CD4-positive, alpha-beta T cell (primary cell): ENCODE measurements at regions of chr10 and their contacts with region 1.

Region 1: GRCh38 chr10:98134431-98135221 is at the start of gene R3HCC1L:
- DNase-seq: peak; percentile 84 to 96 (median 92)
- ATAC-seq: peak; percentile 94
- H3K4me3 ChIP-seq: peak within 1 kb of the TSS; percentile 96
- H3K4me3 Mint-ChIP-seq: peak within 1 kb of the TSS; percentile 86
- H3K27ac ChIP-seq: peak within 1 kb of the TSS; percentile 87 to 97
- H3K27ac Mint-ChIP-seq: peak within 1 kb of the TSS; percentile 96
- H3K4me1 ChIP-seq: peaks cover 35% of the 10 kb centered on the region
- H3K4me1 Mint-ChIP-seq: peaks cover 48% of the 10 kb centered on the region
- H3K27me3 ChIP-seq: no peaks in the 10 kb centered on the region
- H3K27me3 Mint-ChIP-seq: no peaks in the 10 kb centered on the region
- CTCF ChIP-seq: no peak
- total RNA-seq, gene R3HCC1L: 12.7 to 13.7 TPM

Region 2: DNA sequence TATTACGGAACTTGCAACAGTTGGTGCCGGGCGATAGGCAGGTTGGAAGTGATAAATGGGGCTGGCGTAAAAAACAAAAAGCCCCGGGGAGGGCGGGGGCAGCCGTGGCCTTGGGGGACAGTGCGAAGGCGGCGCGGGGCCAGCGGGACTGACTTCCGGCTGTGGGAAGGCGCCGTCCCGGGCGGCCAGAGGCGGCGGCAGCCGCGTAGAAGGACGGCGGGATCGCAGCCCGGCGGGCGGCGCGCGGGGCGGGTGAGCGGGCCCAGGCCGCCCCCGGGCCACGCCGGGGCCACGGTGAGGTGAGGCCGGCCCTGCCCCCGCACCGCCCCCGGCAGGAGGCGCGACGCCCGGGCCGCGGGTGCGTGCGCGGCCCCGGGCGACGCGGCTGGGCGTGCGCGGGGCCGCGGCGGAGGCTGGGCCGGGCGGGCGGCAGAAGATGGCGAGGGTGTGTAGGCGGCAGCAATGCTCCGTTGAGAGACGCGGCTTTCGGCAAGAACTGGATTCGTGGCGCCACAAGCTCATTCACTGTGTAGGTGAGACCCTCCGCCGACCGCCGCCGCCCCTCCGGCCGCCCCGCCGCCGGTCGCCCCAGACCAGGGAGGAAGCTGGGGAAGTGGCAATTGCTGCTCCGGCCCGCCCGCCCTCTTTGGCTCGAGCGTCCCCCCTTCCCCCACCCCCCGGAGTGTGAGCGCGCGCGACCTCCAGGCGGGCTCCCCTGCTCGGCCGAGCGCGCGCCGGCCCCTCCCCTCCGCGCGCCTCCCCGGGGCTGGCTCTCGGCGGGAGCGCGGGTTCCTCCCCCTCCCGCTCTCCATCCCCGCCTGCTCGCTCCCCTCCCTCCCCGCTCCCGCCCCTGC is 1302.5 kb before region 1 on chr10 and contains the start of gene LCOR:
- CTCF ChIA-PET with region 1: no interaction called
- POLR2A ChIA-PET with region 1: interaction called, 3 read pairs
- intact Hi-C with region 1: loop called in 1 of 2 experiments (anchors 10 kb)
- DNase-seq: peak; percentile 62 to 94 (median 78)
- ATAC-seq: peak; percentile 65
- H3K4me3 ChIP-seq: peak within 1 kb of the TSS; percentile 71
- H3K4me3 Mint-ChIP-seq: peak within 1 kb of the TSS; percentile 94
- H3K27ac ChIP-seq: peak within 1 kb of the TSS; percentile 78 to 80
- H3K27ac Mint-ChIP-seq: peak within 1 kb of the TSS; percentile 94
- H3K4me1 ChIP-seq: peaks cover 12% of the 10 kb centered on the region
- H3K4me1 Mint-ChIP-seq: peaks cover 54% of the 10 kb centered on the region
- H3K27me3 ChIP-seq: no peaks in the 10 kb centered on the region
- H3K27me3 Mint-ChIP-seq: no peaks in the 10 kb centered on the region
- CTCF ChIP-seq: no peak
- total RNA-seq, gene LCOR: 46.0 to 56.0 TPM

Region 3: GRCh38 chr10:97425964-97426775 is 708.5 kb before region 1 on chr10 and contains the start of gene PGAM1:
- CTCF ChIA-PET with region 1: no interaction called
- POLR2A ChIA-PET with region 1: no interaction called
- intact Hi-C with region 1: loop called in 1 of 2 experiments (anchors 10 kb)
- DNase-seq: peak; percentile 90 to 99 (median 94)
- ATAC-seq: peak; percentile 82
- H3K4me3 ChIP-seq: peak within 1 kb of the TSS; percentile 78
- H3K4me3 Mint-ChIP-seq: peak within 1 kb of the TSS; percentile 95
- H3K27ac ChIP-seq: peak within 1 kb of the TSS; percentile 75 to 85
- H3K27ac Mint-ChIP-seq: peak within 1 kb of the TSS; percentile 89
- H3K4me1 ChIP-seq: peaks cover 43% of the 10 kb centered on the region
- H3K4me1 Mint-ChIP-seq: peaks cover 46% of the 10 kb centered on the region
- H3K27me3 ChIP-seq: no peaks in the 10 kb centered on the region
- H3K27me3 Mint-ChIP-seq: no peaks in the 10 kb centered on the region
- CTCF ChIP-seq: peak; percentile 64
- total RNA-seq, gene PGAM1: 50.7 to 55.5 TPM

Region 4: GRCh38 chr10:97686962-97687784 is 447.5 kb before region 1 on chr10 and contains the start of gene AVPI1:
- CTCF ChIA-PET with region 1: no interaction called
- POLR2A ChIA-PET with region 1: interaction called, 7 read pairs
- intact Hi-C with region 1: loop called in 1 of 2 experiments (anchors 10 kb)
- DNase-seq: peak; percentile 90 to 98 (median 94)
- ATAC-seq: peak; percentile 91
- H3K4me3 ChIP-seq: peak within 1 kb of the TSS; percentile 82
- H3K4me3 Mint-ChIP-seq: peak within 1 kb of the TSS; percentile 90
- H3K27ac ChIP-seq: peak within 1 kb of the TSS; percentile 52 to 62
- H3K27ac Mint-ChIP-seq: peak within 1 kb of the TSS; percentile 75
- H3K4me1 ChIP-seq: peaks cover 35% of the 10 kb centered on the region
- H3K4me1 Mint-ChIP-seq: peaks cover 16% of the 10 kb centered on the region
- H3K27me3 ChIP-seq: no peaks in the 10 kb centered on the region
- H3K27me3 Mint-ChIP-seq: no peaks in the 10 kb centered on the region
- CTCF ChIP-seq: no peak
- total RNA-seq, gene AVPI1: 10.7 to 11.6 TPM

Region 5: DNA sequence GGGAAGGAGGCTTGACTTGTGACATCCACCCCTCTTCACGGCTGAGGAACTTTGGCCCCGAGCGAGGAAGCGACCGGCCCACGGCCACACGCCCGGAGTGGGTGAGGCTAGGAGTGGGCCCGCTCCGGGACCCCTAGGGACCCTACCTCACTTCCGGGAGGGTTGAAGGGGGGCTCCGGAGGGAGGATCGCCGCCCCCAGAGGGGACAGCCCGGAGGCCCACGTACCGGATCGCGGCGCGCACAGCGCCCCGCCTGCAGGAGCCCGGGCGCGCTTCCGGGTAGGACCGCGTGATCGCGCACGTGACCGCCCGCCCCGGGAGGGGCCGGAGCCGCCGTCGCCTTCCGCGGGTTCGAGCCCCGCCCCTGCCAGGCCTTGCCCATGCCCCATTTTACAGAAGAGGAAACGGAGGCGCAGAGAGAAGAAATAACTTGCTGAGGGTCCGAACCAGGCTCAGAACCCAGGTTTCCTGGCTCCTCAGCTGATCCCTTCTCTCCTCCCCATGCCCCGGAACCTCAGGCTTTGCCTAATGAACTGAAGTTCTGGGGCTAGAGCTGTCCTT is 312.1 kb after region 1 on chr10 and contains the start of gene HPS1:
- CTCF ChIA-PET with region 1: no interaction called
- POLR2A ChIA-PET with region 1: interaction called, 8 read pairs
- intact Hi-C with region 1: loop called in 1 of 2 experiments (anchors 2 kb)
- DNase-seq: peak; percentile 58 to 88 (median 75)
- ATAC-seq: peak; percentile 91
- H3K4me3 ChIP-seq: peak within 1 kb of the TSS; percentile 71
- H3K4me3 Mint-ChIP-seq: peak within 1 kb of the TSS; percentile 94
- H3K27ac ChIP-seq: peak within 1 kb of the TSS; percentile 66 to 77
- H3K27ac Mint-ChIP-seq: peak within 1 kb of the TSS; percentile 93
- H3K4me1 ChIP-seq: peaks cover 41% of the 10 kb centered on the region
- H3K4me1 Mint-ChIP-seq: peaks cover 40% of the 10 kb centered on the region
- H3K27me3 ChIP-seq: no peaks in the 10 kb centered on the region
- H3K27me3 Mint-ChIP-seq: peaks cover 1% of the 10 kb centered on the region
- CTCF ChIP-seq: no peak
- total RNA-seq, gene HPS1: 49.8 to 50.5 TPM

Region 6: DNA sequence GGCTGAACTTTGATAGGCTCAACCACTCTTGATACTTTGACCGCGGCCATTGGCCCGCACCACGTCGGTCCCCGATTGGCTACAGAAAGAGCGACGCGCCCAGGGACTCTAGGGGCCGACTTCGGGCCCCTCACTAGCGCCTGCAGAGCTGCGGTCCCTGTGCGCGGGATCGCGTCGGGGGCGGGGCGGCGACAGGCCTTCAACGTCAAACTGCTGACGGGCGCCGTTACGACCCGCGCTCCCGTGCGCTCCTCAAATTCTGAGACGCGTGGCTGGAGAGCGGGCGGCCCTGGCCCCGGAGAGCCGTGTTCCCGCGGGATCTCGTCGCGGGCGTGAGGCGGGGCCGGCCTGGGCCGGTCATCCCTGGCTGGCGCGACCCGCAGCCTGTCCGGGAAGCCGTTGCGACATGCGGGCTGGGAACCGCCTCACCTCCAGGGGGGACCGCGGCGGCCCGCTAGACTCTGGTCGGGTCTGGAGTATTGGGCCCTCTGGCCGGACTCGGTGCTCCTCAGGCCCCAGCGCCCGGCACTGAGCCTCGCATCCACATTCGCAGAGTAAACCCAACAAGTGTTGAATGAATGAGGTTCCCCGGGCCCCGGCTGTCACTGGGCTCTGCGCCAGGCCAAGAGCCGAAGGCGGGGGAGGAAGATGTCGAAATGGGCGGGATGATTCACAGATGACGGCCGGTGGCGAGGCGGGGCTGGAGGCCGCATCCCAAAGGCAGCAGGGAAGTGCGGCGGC is 1486.3 kb after region 1 on chr10:
- CTCF ChIA-PET with region 1: no interaction called
- POLR2A ChIA-PET with region 1: no interaction called
- intact Hi-C with region 1: loop called in 1 of 2 experiments (anchors 10 kb)
- DNase-seq: peak; percentile 68 to 98 (median 83)
- ATAC-seq: peak; percentile 85
- H3K4me3 ChIP-seq: peak overlapping the region; percentile 82
- H3K4me3 Mint-ChIP-seq: peak overlapping the region; percentile 91
- H3K27ac ChIP-seq: peak overlapping the region; percentile 93 to 96
- H3K27ac Mint-ChIP-seq: peak overlapping the region; percentile 91
- H3K4me1 ChIP-seq: peaks cover 19% of the 10 kb centered on the region
- H3K4me1 Mint-ChIP-seq: peaks cover 52% of the 10 kb centered on the region
- H3K27me3 ChIP-seq: no peaks in the 10 kb centered on the region
- H3K27me3 Mint-ChIP-seq: no peaks in the 10 kb centered on the region
- CTCF ChIP-seq: no peak